ENCODE measurements at regions of chr14 and their contacts with region 1.

Region 1: DNA sequence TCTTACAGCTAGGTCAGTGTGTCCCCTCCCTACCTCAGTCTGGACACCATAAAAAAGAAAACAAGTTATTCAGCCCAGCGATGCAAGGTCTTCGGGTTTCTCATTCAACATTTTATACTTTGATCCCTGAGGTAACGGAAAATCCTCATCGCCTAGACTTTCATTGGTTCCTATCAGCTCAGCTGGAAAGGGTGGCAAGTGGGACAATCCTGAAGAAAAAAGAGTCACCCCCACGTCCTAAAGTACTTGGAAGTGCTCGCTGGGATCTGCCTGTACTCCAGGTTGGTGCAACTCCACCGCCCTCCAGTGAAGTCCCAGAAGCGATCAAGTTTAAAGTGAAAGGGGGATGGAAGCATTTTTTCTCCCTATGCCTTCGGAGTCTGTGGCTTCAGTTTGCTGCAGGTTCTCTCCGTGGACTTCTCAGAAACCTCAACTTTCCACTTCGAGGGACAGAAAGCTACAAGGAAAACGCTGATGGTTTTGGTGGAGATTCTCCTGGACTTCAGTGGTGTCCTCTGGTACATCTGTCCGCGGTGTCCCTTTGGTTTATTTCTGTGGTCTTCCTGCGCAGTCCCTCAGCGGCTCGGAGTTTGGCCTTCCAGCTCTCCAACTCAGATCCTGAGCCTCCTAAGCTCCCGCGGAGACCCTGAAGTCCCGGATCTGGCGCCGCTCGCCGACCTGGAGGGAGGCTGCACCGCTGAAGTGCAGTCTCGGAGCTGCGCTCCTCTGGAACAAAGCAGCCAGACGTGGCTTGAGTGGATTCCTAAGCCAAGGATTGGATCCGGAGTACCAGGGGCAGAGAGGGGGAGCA is 1.8 kb upstream of the LRFN5 start:
- H3K4me3 ChIP-seq: peak overlapping the region; percentile 32
- H3K27ac ChIP-seq: no peak overlapping the region
- H3K4me1 ChIP-seq: 0 out of 2 replicates have a peak, but pooled peaks cover 2% of the 10 kb centered on the region
- CTCF ChIP-seq: no peak

Region 2: DNA sequence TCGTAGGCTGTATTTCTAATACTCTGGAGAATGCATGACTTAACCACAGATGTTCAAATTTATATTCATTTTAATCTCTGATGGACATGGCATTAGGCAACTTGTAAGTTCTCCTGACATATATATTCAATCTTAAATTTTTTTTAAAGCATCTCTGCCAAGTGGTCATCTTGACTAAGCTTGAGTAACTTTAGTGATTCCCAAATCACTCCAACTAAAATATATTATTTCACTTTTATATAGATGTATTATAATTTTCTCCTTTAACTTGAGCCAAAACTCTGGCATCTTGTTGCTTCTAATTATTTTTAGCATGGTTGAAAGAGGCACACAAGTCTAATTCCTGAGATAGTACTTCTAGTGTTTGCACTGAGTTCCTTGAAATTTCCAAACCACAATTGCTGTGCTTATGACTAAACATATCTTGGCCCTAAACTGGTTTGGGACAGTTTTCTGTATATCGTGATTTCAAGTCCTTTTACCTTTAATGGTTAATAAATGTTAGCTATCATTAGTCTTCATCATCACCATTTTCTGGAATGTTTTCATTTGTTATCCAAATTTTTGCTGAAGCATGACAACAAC is 10.2 kb after region 1 on chr14:
- CTCF ChIA-PET with region 1: interaction called, 11 read pairs
- POLR2A ChIA-PET with region 1: no interaction called
- H3K4me3 ChIP-seq: no peak overlapping the region
- H3K27ac ChIP-seq: no peak overlapping the region
- H3K4me1 ChIP-seq: no peaks in the 10 kb centered on the region
- CTCF ChIP-seq: no peak

Measured in HEK293 (cell line).